Activated naive CD4-positive, alpha-beta T cell treated with anti-CD3 and anti-CD28 coated beads, Interleukin-2, amount 10 ng/mL, durations not matched to agents 7 days and 5 days (primary cell): ENCODE measurements at regions of chr13 and their contacts with region 1.

Region 1: GRCh38 chr13:45047394-45048310 is 58.3 kb downstream of the GPALPP1 start:
- DNase-seq: peak; percentile 87
- H3K4me3 Mint-ChIP-seq: peak overlapping the region; percentile 73
- H3K27ac Mint-ChIP-seq: no peak overlapping the region
- H3K4me1 Mint-ChIP-seq: peaks cover 13% of the 10 kb centered on the region
- H3K27me3 Mint-ChIP-seq: peaks cover 31% of the 10 kb centered on the region

Region 2: GRCh38 chr13:44484562-44485138 is 563.0 kb before region 1 on chr13:
- CTCF ChIA-PET with region 1: interaction called, 11 read pairs
- DNase-seq: no peak
- H3K4me3 Mint-ChIP-seq: peak overlapping the region; percentile 29
- H3K27ac Mint-ChIP-seq: peak overlapping the region; percentile 15
- H3K4me1 Mint-ChIP-seq: peaks cover 14% of the 10 kb centered on the region
- H3K27me3 Mint-ChIP-seq: no peaks in the 10 kb centered on the region

Region 3: GRCh38 chr13:44930963-44931623 is 116.6 kb before region 1 on chr13:
- CTCF ChIA-PET with region 1: no interaction called
- DNase-seq: no peak
- H3K4me3 Mint-ChIP-seq: no peak overlapping the region
- H3K27ac Mint-ChIP-seq: no peak overlapping the region
- H3K4me1 Mint-ChIP-seq: peaks cover 8% of the 10 kb centered on the region
- H3K27me3 Mint-ChIP-seq: peaks cover 15% of the 10 kb centered on the region

Region 4: GRCh38 chr13:44967704-44968451 is 79.8 kb before region 1 on chr13:
- CTCF ChIA-PET with region 1: no interaction called
- DNase-seq: no peak
- H3K4me3 Mint-ChIP-seq: no peak overlapping the region
- H3K27ac Mint-ChIP-seq: no peak overlapping the region
- H3K4me1 Mint-ChIP-seq: peaks cover 2% of the 10 kb centered on the region
- H3K27me3 Mint-ChIP-seq: no peaks in the 10 kb centered on the region

Region 5: DNA sequence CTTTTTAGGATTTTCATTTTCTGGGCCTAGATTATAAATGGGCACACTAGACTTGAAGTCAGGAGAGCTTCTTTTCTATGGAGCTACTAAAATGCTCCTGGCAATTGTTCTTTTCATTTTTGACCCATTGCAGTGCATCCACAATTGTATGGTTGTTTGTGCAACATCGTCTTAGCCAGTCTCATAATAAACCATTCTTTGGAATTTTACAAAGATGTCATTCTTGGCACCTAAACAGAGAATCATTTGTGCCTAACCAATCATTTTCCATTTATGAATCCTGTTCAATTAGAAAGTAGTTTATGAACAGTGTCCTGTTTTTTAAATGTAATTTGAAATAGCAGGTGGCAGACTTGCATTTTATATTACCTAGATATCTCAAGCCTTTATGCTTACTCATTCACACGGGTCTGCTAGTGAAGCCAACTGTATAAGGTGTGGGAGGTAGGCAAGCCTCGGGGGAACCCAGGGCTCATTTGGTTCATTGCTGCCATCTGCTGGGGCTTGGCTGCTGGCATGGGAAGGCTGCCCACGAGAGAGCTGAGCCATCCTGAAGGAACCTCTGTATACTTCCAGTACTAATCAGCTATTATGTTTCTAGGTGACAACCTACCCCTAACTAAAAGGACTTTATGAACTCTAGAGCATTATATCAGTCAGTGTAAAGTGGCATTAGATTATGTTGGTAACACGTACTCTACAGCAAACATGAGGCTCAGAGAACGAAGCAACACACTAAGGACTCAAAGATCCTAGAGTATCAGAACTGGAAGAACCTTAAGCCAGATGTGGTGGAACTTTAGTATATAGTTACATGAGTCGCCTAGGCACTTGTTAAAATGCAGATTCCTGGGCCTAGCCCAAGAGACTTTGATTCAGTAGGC is 233.3 kb after region 1 on chr13:
- CTCF ChIA-PET with region 1: interaction called, 50 read pairs
- DNase-seq: peak; percentile 56
- H3K4me3 Mint-ChIP-seq: no peak overlapping the region
- H3K27ac Mint-ChIP-seq: no peak overlapping the region
- H3K4me1 Mint-ChIP-seq: no peaks in the 10 kb centered on the region
- H3K27me3 Mint-ChIP-seq: no peaks in the 10 kb centered on the region

Region 6: GRCh38 chr13:45292176-45292575 is 244.5 kb after region 1 on chr13:
- CTCF ChIA-PET with region 1: interaction called, 10 read pairs
- DNase-seq: no peak
- H3K4me3 Mint-ChIP-seq: no peak overlapping the region
- H3K27ac Mint-ChIP-seq: no peak overlapping the region
- H3K4me1 Mint-ChIP-seq: peaks cover 18% of the 10 kb centered on the region
- H3K27me3 Mint-ChIP-seq: no peaks in the 10 kb centered on the region

Region 7: GRCh38 chr13:45310341-45311125 is 262.9 kb after region 1 on chr13:
- CTCF ChIA-PET with region 1: interaction called, 90 read pairs
- DNase-seq: no peak
- H3K4me3 Mint-ChIP-seq: peak overlapping the region; percentile 75
- H3K27ac Mint-ChIP-seq: peak overlapping the region; percentile 59
- H3K4me1 Mint-ChIP-seq: peaks cover 22% of the 10 kb centered on the region
- H3K27me3 Mint-ChIP-seq: peaks cover 42% of the 10 kb centered on the region